Activated CD8-positive, alpha-beta memory T cell treated with anti-CD3 and anti-CD28 coated beads, Interleukin-2, amount 10 ng/mL, durations not matched to agents 7 days and 5 days (primary cell): ENCODE measurements at regions of chr9 and their contacts with region 1.

Region 1: DNA sequence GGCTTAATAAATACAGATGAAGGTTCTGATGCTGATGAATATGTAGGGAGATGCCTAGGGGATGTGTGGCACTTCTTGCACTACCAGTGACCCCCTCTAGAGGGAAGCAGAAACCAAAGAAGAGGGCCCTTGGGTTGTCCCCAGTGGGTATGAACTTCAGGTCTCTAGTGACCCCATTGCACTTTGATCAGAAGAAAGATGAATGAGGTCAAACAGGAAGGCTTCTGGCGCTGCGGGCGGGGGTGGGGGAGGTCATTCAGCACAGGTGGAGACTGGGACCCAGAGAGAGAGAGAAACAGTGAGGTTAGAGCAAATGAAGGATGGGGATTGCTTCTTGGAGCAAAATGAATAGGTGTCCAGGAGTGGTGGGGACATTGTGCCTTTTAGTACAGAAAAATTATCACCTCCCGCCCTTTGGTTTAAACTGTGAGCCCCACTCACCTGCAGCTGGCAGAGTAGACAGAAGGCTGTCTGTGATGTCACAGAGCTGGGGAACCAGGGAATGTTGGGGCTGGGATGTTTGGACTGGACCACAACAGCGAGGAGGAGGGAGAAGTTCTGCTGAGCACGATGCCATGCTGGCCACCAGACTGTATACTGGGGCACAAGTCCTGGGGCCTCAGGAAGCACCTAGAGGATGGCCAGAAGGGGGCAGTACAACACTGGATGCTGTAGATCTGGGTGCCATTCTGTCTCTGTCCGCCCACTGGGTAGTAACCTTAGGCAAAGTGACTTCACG is at the start of gene TEX48:
- DNase-seq: peak; percentile 93
- ATAC-seq: peak; percentile 95
- H3K4me3 Mint-ChIP-seq: peak within 1 kb of the TSS; percentile 56
- H3K27ac Mint-ChIP-seq: peak within 1 kb of the TSS; percentile 94
- H3K4me1 Mint-ChIP-seq: peaks cover 60% of the 10 kb centered on the region
- H3K27me3 Mint-ChIP-seq: peaks cover 20% of the 10 kb centered on the region
- total RNA-seq, gene TEX48: 0.73 to 1.6 TPM

Region 2: DNA sequence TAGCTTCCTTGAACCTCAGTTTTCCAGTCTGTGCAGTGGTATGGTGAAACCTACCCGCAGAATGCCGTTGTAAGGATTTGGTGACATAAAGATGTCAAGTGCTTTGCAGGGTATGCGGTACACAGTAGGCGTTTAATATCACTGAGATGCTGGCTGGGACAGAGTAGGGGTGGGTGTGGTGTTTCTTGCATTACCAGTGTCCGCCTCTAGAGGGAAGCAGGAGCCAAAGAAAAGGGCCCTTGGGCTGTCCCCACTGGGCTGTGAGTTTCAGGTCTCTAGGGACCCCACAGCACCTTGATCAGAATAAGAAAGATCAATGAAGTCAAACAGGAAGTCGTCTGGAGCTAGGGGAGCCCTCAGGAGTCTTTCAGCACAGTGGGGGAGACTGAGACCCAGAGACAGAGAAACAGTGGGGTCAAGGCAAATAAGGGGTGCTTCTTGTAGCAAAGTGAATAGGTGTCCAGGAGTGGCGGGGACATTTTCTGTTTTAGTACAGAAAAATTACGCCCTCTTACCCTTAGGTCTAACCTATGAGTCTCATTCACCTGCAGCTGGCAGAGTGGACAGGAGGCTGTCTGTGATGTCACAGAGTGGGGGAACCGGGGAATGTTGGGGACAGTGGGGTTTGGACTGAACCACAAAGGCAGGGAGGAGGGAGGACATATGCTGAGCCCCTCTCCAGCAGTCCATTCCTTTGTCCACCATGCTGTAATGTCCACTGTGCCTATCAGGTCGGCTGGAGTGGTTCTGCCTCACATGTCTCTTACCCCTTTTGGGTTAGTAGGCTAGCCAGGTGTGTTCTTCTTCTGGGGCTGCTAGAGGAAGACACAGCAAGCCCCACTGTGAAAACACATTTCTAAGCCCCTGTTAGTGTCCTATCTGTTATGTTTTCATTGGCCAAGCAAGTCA is 19.4 kb before region 1 on chr9:
- CTCF ChIA-PET with region 1: interaction called, 12 read pairs
- DNase-seq: peak; percentile 76
- ATAC-seq: peak; percentile 94
- H3K4me3 Mint-ChIP-seq: no peak overlapping the region
- H3K27ac Mint-ChIP-seq: no peak overlapping the region
- H3K4me1 Mint-ChIP-seq: peaks cover 2% of the 10 kb centered on the region
- H3K27me3 Mint-ChIP-seq: peaks cover 28% of the 10 kb centered on the region

Region 3: GRCh38 chr9:114718801-114719221 is 37.0 kb after region 1 on chr9:
- CTCF ChIA-PET with region 1: interaction called, 17 read pairs
- DNase-seq: peak; percentile 99
- ATAC-seq: peak; percentile 94
- H3K4me3 Mint-ChIP-seq: peak overlapping the region; percentile 50
- H3K27ac Mint-ChIP-seq: peak overlapping the region; percentile 94
- H3K4me1 Mint-ChIP-seq: peaks cover 63% of the 10 kb centered on the region
- H3K27me3 Mint-ChIP-seq: peaks cover 8% of the 10 kb centered on the region

Region 4: DNA sequence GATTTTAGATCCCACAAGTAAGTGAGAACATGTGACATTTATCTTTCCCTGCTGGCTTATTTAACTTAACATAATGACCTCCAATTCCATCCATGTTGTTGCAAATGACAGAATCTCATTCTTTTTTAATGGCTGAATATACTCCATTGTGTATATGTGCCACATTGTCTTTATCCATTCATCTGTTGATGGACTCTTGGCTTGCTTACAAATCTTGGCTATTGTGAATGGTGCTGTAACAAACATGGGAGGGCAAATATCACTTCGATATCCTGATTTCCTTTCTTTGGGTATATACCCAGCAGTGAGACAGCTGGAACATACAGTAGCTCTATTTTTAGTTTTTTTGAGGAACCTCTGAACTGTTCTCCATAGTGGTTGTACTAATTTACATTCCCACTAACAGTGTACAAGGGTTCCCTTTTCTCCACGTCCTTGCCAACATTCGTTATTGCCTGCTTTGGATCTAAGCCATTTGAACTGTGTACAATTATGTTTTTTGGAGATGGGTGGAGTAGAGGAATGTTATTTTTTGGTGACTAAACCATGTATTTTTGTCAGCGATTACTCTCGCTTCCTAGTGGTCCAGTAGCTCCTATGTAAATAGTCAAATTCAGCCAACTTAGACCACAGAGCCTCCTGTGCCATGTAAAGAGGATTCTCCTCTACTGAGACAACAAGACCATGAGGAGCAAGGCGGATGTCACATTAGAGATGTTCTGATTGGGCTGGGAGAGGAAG is 63.5 kb after region 1 on chr9:
- CTCF ChIA-PET with region 1: interaction called, 164 read pairs
- DNase-seq: no peak
- ATAC-seq: no peak
- H3K4me3 Mint-ChIP-seq: no peak overlapping the region
- H3K27ac Mint-ChIP-seq: no peak overlapping the region
- H3K4me1 Mint-ChIP-seq: peaks cover 7% of the 10 kb centered on the region
- H3K27me3 Mint-ChIP-seq: no peaks in the 10 kb centered on the region

Region 5: DNA sequence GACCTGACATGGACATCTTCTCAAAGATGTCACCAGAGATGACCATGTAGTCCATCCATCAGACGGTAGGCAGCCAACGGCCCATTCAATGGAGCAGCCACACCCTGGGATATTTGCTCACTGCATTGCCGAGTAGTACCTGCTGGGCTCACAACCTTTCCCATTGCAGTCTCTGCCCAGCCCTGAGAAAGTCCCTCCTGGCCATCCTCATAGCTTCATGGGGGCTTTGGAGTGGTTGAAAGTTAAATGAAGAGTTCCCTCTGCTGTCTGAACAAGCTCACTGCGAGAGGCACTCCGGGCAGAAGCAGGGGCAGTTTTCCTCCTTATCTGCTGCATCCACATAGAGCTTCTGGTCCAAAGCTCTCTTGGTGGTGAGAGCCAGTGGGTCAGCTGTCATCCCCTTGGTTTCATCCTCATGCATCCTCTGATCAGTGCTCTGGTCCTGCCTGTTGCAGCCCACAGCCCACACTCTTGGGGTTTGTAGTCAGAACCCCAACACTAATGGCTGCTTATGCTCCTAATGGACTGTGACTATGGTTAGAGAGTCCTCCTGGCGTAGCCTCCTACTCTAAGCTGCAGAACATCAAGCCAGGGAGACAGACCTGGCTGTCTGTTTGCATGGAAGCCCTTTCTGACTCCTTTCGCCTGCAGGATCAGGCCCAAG is 225.3 kb after region 1 on chr9:
- CTCF ChIA-PET with region 1: interaction called, 152 read pairs
- DNase-seq: peak; percentile 64
- ATAC-seq: peak; percentile 35
- H3K4me3 Mint-ChIP-seq: no peak overlapping the region
- H3K27ac Mint-ChIP-seq: peak overlapping the region; percentile 89
- H3K4me1 Mint-ChIP-seq: peaks cover 55% of the 10 kb centered on the region
- H3K27me3 Mint-ChIP-seq: no peaks in the 10 kb centered on the region

Region 6: GRCh38 chr9:114930056-114930812 is 248.5 kb after region 1 on chr9 and contains the start of gene TNFSF8:
- CTCF ChIA-PET with region 1: interaction called, 22 read pairs
- DNase-seq: peak; percentile 91
- ATAC-seq: peak; percentile 82
- H3K4me3 Mint-ChIP-seq: peak within 1 kb of the TSS; percentile 93
- H3K27ac Mint-ChIP-seq: peak within 1 kb of the TSS; percentile 98
- H3K4me1 Mint-ChIP-seq: peaks cover 42% of the 10 kb centered on the region
- H3K27me3 Mint-ChIP-seq: peaks cover 2% of the 10 kb centered on the region
- total RNA-seq, gene TNFSF8: 30.3 to 34.5 TPM